Upper lobe of right lung (tissue), 1 donor: ENCODE measurements at regions of chr1 and their contacts with region 1.

Region 1: GRCh38 chr1:55277377-55278130 is 62.4 kb upstream of the USP24 start:
- DNase-seq: peak; percentile 83
- ATAC-seq: peak; percentile 97
- H3K4me3 ChIP-seq: no peak overlapping the region
- H3K27ac ChIP-seq: no peak overlapping the region
- H3K4me1 ChIP-seq: no peaks in the 10 kb centered on the region
- H3K27me3 ChIP-seq: no peaks in the 10 kb centered on the region
- CTCF ChIP-seq: peak; percentile 90

Region 2: GRCh38 chr1:55107101-55107500 is 170.5 kb before region 1 on chr1:
- intact Hi-C with region 1: no loop called
- DNase-seq: no peak
- ATAC-seq: no peak
- H3K4me3 ChIP-seq: no peak overlapping the region
- H3K27ac ChIP-seq: no peak overlapping the region
- H3K4me1 ChIP-seq: no peaks in the 10 kb centered on the region
- H3K27me3 ChIP-seq: no peaks in the 10 kb centered on the region
- CTCF ChIP-seq: no peak

Region 3: DNA sequence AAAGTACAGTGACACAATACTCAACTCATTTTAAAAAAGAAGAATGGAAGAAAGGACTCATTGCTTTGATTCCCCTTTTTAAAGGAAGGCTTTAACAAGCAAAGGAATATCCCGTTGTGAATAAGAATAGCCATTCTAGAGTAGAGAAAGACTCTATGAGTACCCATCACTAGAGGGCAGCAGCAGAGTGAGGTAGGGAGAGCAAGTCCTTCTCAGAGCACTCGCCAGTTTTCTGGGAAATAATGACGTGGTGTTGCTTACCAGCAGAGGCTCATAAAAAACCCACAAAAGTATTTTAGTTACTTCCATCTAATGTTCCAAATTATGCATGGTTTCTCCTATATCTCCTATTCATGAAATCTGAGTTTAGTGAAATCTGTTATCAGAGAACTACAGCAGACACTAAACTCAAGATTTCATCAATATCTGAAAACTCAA is 137.0 kb before region 1 on chr1:
- intact Hi-C with region 1: loop called (anchors 5 kb)
- DNase-seq: no peak
- ATAC-seq: peak; percentile 99
- H3K4me3 ChIP-seq: no peak overlapping the region
- H3K27ac ChIP-seq: no peak overlapping the region
- H3K4me1 ChIP-seq: peaks cover 7% of the 10 kb centered on the region
- H3K27me3 ChIP-seq: no peaks in the 10 kb centered on the region
- CTCF ChIP-seq: peak; percentile 85